HEK293 (cell line): ENCODE measurements at regions of chr3 and their contacts with region 1.

Region 1: DNA sequence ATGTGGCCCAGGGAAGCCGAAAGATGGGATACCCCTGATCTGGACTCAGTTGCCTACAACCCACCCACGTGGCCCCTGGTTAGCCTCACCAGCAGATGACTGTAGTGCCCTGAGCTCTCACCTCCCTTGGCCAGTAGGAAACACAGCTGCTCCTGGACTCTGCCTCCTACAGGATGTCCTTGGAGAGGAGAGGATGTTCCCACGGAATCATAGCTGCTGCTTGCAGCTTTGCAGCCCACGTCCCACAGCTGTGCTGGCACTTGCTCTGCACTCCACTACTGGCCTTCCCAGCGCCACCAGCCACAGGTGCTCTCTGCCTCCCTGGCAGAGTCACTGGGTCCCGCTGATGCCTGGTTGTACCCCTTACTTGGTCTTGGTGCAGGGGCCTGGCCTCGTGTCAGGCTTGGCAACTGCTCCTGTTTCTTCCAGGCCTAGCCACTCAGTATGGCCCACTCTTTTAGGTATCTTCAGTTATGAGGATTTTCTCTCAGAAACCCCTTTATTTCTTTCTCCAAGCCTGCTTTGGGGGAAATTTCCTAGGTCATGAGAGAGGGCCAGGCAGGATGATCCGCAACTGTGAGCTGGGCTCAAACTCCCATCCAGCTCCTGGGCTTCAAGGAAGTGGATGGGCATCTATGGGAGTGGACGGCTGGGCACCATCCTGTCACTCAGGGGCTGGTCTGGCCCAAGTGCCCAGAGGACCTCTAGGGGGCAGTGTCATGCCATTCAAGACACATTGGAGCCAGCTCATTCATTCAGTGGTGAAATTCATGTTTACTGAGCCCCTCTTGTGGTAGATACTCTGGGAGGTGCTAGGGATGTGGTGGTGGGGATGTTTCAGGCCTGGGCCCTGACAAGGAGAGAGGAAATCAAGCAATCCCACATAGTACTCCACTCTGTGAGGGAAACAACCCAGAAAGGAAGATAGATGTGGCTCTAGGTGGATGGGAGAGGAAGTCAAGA is 16.2 kb upstream of the VILL start:
- H3K4me3 ChIP-seq: no peak overlapping the region
- H3K27ac ChIP-seq: no peak overlapping the region
- H3K4me1 ChIP-seq: no peaks in the 10 kb centered on the region
- CTCF ChIP-seq: peak; percentile 69

Region 2: GRCh38 chr3:37855363-37855970 is 118.9 kb before region 1 on chr3:
- CTCF ChIA-PET with region 1: interaction called, 164 read pairs
- POLR2A ChIA-PET with region 1: no interaction called
- H3K4me3 ChIP-seq: no peak overlapping the region
- H3K27ac ChIP-seq: no peak overlapping the region
- H3K4me1 ChIP-seq: no peaks in the 10 kb centered on the region
- CTCF ChIP-seq: peak; percentile 74

Region 3: DNA sequence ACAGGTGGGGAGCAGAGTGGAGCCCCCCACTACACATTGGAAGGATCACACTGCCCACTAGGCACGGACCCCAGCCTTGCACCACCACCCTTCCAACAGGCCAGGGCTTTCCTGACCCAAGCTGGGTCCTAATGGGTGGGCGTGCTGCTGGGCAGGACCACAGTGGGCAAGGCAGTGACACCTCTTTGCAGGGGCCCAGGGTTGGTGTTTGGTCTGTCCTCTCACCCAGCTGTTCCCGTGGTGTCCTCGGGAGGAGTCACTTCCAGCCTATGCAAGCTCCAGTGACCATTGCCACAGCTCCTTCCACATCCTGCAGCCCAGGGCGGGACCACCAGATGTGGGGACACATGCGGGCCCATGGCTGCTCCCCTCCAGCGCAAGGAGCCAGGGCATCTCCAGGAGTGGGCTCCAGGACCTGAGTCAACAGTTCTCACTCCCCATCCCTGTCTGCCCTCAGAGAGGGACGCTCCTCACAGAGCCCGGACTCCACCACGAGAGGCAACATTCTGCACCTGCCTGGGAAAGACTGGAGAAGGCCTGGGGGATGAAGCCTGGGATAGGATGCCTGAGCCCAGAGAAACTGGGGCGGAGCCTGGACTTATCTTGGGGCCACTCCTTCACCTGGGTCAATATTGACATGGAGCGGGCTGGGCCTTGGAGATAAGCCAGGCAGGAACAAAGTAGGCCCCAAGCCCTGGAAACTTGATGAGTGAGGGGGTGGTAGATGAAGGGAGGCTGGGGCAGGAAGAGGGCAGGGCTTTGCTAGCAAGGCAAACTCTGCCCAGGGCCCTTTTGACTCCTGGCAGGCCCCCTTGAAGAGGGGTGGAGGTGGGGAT is 12.3 kb after region 1 on chr3:
- CTCF ChIA-PET with region 1: interaction called, 12 read pairs
- POLR2A ChIA-PET with region 1: interaction called, 3 read pairs
- H3K4me3 ChIP-seq: no peak overlapping the region
- H3K27ac ChIP-seq: no peak overlapping the region
- H3K4me1 ChIP-seq: no peaks in the 10 kb centered on the region
- CTCF ChIP-seq: no peak

Region 4: DNA sequence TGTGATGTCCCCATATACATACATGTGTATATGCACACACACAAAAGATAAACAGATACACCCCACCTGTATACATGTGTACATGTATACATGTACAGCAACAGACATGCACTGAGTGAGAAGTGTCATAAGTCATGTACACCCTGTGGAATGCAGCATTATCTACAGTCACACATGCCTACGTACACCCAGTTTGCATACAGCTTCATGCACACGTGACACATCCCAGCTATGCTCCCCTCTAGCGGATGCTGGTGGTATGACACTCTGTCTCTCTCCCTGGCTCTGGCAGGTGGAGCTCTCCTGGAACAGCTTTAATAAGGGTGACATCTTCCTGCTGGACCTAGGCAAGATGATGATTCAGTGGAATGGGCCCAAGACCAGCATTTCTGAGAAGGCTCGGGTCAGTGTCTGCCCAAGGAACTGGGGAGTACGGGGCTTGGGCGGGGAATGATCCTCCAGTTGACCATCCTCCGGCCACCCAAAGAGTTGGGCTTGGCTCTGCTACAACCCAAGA is 22.4 kb after region 1 on chr3:
- CTCF ChIA-PET with region 1: interaction called, 16 read pairs
- POLR2A ChIA-PET with region 1: interaction called, 3 read pairs
- H3K4me3 ChIP-seq: no peak overlapping the region
- H3K27ac ChIP-seq: no peak overlapping the region
- H3K4me1 ChIP-seq: no peaks in the 10 kb centered on the region
- CTCF ChIP-seq: peak; percentile 65; the same call in 1 of the 2 replicates

Region 5: GRCh38 chr3:38004415-38005076 is 30.1 kb after region 1 on chr3:
- CTCF ChIA-PET with region 1: interaction called, 14 read pairs
- POLR2A ChIA-PET with region 1: no interaction called
- H3K4me3 ChIP-seq: no peak overlapping the region
- H3K27ac ChIP-seq: no peak overlapping the region
- H3K4me1 ChIP-seq: no peaks in the 10 kb centered on the region
- CTCF ChIP-seq: peak; percentile 83